ENCODE measurements at regions of chr2 and their contacts with region 1.

Region 1: GRCh38 chr2:10802657-10803056 is 9.9 kb downstream of the PDIA6 start:
- DNase-seq: no peak
- H3K4me3 ChIP-seq: no peak overlapping the region
- H3K27ac ChIP-seq: no peak overlapping the region
- H3K4me1 ChIP-seq: no peaks in the 10 kb centered on the region
- H3K27me3 ChIP-seq: no peaks in the 10 kb centered on the region
- CTCF ChIP-seq: no peak
- POLR2A ChIP-seq: no peak

Region 2: DNA sequence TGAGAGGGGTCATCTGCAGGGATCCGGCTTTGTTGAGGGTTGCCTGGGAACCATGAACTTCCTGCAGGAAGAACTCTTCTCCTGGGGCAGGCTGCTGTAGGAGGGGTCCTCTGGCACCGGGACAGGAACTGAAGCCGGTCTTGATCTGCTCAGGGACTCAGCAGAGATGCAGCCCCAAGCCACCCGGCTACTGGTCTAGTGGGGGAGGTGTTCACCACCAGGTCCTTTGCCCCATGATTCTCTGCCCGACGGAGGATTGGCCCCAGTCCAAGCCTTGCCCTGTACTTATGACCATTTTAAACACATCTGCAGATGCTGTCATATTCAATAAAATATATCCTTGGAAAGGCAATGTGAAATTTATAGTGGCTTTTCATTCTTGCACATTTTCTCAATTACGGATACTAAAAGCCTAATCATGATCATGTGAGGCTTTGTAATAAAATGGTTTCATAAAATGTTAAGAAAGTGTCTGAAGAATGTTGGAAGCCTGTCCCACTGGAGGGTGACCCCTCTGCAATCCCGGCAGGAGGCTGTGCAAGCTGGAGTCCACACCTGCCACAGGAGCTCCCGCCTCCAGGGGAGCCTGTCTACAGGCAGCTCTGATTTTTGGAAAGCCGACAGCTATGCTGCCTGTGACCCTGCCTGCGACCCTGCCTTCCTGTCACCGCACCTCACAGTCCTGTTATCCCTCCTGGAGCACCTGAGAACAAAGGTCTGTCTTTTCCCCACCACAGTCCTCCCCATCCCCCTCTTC is 1058.2 kb before region 1 on chr2:
- intact Hi-C with region 1: loop called (anchors 5 kb)
- DNase-seq: no peak
- H3K4me3 ChIP-seq: no peak overlapping the region
- H3K27ac ChIP-seq: no peak overlapping the region
- H3K4me1 ChIP-seq: no peaks in the 10 kb centered on the region
- H3K27me3 ChIP-seq: no peaks in the 10 kb centered on the region
- CTCF ChIP-seq: no peak
- POLR2A ChIP-seq: no peak

Region 3: DNA sequence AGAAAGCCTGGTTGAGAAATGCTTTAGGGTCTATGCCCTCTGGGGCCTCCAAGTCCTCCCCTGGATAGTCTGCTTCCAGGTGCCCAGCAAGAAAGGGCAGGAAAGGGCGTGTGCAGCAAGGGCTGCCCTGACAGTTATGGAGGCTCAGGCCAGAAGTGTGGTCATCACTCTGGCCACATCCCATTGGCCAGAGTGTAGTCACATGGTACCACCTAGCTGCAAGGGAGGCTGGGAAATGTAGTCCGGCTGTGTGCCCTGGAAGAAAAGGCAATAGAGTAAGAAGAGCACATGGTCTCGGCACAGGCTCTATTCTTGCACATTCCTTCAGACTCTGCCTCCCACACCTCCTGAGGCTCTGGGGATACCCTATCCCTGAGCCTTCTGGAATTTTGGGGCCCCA is 390.3 kb before region 1 on chr2:
- intact Hi-C with region 1: no loop called
- DNase-seq: no peak
- H3K4me3 ChIP-seq: no peak overlapping the region
- H3K27ac ChIP-seq: no peak overlapping the region
- H3K4me1 ChIP-seq: peaks cover 0 to 8% of the 10 kb centered on the region in 2 donors
- H3K27me3 ChIP-seq: no peaks in the 10 kb centered on the region
- CTCF ChIP-seq: no peak
- POLR2A ChIP-seq: no peak

Region 4: GRCh38 chr2:11757101-11757500 is 954.4 kb after region 1 on chr2:
- intact Hi-C with region 1: loop called (anchors 5 kb)
- DNase-seq: no peak
- H3K4me3 ChIP-seq: no peak overlapping the region
- H3K27ac ChIP-seq: no peak overlapping the region
- H3K4me1 ChIP-seq: peaks cover 8 to 15% of the 10 kb centered on the region in 2 donors
- H3K27me3 ChIP-seq: no peaks in the 10 kb centered on the region
- CTCF ChIP-seq: no peak
- POLR2A ChIP-seq: no peak

Measured in breast epithelium (tissue), 4 donors.